ENCODE measurements at regions of chr7 and their contacts with region 1.

Region 1: GRCh38 chr7:2471396-2471795 is 4.8 kb downstream of the GRIFIN start:
- DNase-seq: peak; percentile 25
- ATAC-seq: peak; percentile 46
- H3K4me3 ChIP-seq: no peak overlapping the region
- H3K27ac ChIP-seq: no peak overlapping the region; the same call in 1 of the 2 replicates
- H3K4me1 ChIP-seq: peaks cover 6% of the 10 kb centered on the region; the same call in 1 of the 2 replicates
- H3K27me3 ChIP-seq: peaks cover 3% of the 10 kb centered on the region; the same call in 1 of the 2 replicates
- CTCF ChIP-seq: no peak
- POLR2A ChIP-seq: no peak
- RAD21 ChIP-seq: no peak

Region 2: DNA sequence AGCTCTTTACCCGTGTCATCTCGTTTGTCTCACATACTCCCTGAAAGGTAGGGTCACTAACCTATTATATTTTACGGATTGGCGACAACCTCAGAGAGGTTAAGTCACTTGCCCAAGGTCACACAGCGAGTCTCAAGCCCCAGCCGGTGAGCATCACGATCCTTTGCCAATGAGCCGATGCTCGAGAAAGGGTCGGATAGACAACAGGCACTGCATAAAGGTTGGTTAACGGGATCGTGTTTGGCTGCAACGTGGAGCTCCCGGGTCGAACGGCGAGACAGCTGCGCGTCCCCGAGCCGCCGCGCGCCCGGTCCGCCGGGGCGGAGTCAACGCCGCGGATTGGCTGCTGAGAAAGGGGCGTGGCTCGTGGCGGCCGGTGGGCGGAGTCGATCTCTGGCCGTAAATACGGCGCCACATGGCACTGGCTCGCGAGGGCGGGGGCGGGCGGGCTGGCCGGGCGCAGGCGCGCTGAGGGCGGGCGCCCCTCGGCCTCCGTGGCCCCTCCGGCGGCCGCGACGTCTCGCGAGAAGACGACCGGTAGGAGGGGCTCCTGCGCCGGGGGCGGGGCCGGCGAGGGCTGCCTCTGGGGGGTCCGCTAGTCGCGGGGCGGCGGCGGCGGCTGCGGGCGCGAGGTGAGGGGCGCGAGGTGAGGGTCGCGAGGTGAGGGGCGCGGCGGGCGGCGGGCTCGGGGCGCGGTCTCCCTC is 68.2 kb before region 1 on chr7 and contains the start of gene CHST12:
- CTCF ChIA-PET with region 1: interaction called, 8 read pairs
- POLR2A ChIA-PET with region 1: no interaction called
- dilution Hi-C with region 1: no loop called
- in situ Hi-C with region 1: no loop called
- intact Hi-C with region 1: loop called (anchors 2 kb)
- DNase-seq: peak; percentile 90
- ATAC-seq: peak; percentile 88
- H3K4me3 ChIP-seq: peak within 1 kb of the TSS; percentile 85
- H3K27ac ChIP-seq: peak within 1 kb of the TSS; percentile 50
- H3K4me1 ChIP-seq: peaks cover 9% of the 10 kb centered on the region
- H3K27me3 ChIP-seq: no peaks in the 10 kb centered on the region
- CTCF ChIP-seq: no peak
- POLR2A ChIP-seq: 0 out of 2 replicates have a peak, but pooled peaks have one; percentile 32
- RAD21 ChIP-seq: no peak
- total RNA-seq, gene CHST12: 3.8 and 4.7 TPM in 2 replicates